Activated T-helper 1 cell treated with anti-CD3 and anti-CD28 coated beads, Interleukin-12 subunit alpha, Interleukin-12 subunit beta, Interleukin-2, Interleukin-4 antibody, amounts not matched to agents 30 ng/mL and 10 ng/mL and 1 ng/mL, durations not matched to agents 14 hours and 24 hours and 36 hours (primary cell): ENCODE measurements at regions of chr12 and their contacts with region 1.

Region 1: GRCh38 chr12:24795699-24796385 is 153.1 kb downstream of the BCAT1 start:
- DNase-seq: no peak
- H3K4me3 Mint-ChIP-seq: peak overlapping the region; percentile 82
- H3K27ac Mint-ChIP-seq: peak overlapping the region; percentile 10
- H3K4me1 Mint-ChIP-seq: peaks cover 48% of the 10 kb centered on the region
- H3K27me3 Mint-ChIP-seq: no peaks in the 10 kb centered on the region

Region 2: DNA sequence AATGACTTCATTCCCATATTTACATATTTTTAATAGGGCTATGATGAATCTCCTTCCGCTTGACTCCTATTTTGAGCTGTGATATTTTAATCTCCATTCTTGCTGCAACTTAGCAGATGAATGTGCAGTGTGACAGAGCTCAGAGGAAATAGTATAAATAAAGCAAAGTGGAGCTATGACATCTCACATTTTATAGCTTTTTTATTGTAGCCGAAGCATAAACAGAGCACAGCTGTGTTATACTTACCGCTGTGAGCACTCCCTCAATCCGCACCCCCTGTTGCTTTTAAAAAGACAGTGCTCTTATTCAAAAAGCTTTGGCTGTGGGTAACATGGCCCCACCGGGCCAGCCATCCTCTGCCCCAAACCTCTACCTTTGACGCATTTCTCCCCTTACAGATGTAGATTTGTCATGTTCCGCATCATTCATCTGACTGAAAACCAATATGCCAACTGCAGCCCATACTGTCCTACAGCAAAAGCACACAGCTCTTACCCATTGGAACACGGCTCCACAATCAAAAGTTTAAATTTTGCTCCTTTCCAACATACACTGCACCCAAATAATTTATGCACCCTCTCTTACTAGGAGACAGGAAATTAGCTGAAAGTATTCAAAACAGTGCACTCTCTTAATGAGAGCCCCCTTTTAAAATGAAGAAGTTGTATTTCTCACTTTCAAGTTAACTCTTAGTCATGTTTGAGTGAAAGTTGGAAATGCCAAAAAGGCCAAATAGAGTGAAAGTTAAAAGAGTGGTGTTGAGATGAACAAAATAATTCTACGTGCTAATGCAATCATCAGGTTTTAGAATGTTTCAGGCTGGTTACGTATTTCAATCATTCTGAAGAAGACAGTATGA is 417.1 kb before region 1 on chr12:
- intact Hi-C with region 1: no loop called
- DNase-seq: no peak
- H3K4me3 Mint-ChIP-seq: no peak overlapping the region
- H3K27ac Mint-ChIP-seq: no peak overlapping the region
- H3K4me1 Mint-ChIP-seq: no peaks in the 10 kb centered on the region
- H3K27me3 Mint-ChIP-seq: no peaks in the 10 kb centered on the region

Region 3: GRCh38 chr12:24719293-24719721 is 76.5 kb before region 1 on chr12:
- intact Hi-C with region 1: no loop called
- DNase-seq: peak; percentile 53
- H3K4me3 Mint-ChIP-seq: peak overlapping the region; percentile 9
- H3K27ac Mint-ChIP-seq: peak overlapping the region; percentile 80
- H3K4me1 Mint-ChIP-seq: peaks cover 35% of the 10 kb centered on the region
- H3K27me3 Mint-ChIP-seq: peaks cover 1% of the 10 kb centered on the region

Region 4: GRCh38 chr12:24822121-24822899 is 26.5 kb after region 1 on chr12:
- intact Hi-C with region 1: loop called (anchors 2 kb)
- DNase-seq: no peak
- H3K4me3 Mint-ChIP-seq: peak overlapping the region; percentile 48
- H3K27ac Mint-ChIP-seq: peak overlapping the region; percentile 91
- H3K4me1 Mint-ChIP-seq: peaks cover 29% of the 10 kb centered on the region
- H3K27me3 Mint-ChIP-seq: no peaks in the 10 kb centered on the region